ENCODE measurements at regions of chr19 and their contacts with region 1.

Region 1: DNA sequence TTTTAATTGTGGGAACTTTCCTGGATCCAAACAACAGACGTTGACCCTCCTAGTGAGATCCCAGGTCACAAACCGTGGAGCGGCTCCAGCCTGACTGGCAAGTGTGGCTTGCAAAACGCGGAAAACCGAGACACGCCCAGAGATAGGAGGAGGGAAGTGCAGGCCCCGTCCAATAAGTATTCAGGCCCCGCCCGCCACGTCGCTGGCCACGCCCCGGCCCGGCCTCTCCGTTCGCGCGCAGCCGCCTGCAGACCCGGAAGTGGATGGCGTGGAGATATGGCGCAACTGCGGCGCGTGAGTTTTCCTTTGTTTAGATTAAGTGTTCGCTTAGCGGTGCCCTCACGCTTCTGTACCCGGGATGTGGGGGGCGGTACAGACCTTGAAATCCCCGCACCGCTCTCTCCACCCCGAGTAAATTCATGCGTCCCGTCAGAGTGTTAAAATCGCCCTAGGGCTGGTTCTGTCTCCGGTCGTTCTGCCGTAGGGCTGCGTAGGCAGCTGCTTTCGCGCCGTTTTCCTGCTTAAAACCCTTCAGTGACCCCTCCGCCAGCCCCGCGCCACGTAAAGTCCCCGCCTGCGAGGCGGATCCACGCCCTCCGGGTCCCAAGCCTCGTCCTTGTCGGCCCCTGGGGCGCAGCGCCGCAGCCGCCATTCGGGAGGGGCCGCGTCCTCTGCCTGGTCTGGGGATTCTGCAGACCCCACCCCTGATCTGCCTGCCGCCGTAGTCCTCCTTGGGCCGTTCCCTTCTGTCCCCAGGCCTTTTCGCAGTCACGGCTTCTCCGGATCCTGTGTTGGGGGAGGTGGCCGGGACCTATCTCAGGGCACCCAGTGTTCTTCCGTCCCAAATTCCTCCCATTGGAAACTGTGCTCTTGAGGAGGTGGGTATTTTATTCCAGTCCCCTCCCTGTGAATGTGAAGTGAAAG is at the start of gene ZNF766:
- DNase-seq: peak; percentile 95 to 96 (median 96)
- H3K4me3 ChIP-seq: peak within 1 kb of the TSS; percentile 64 to 90
- H3K4me3 Mint-ChIP-seq: peak within 1 kb of the TSS; percentile 92 to 99 (median 98)
- H3K27ac ChIP-seq: peak within 1 kb of the TSS; percentile 90
- H3K27ac Mint-ChIP-seq: peak within 1 kb of the TSS; percentile 93 to 98 (median 96)
- H3K4me1 ChIP-seq: peaks cover 42% of the 10 kb centered on the region
- H3K4me1 Mint-ChIP-seq: peaks cover 32 to 56% (median 42%) of the 10 kb centered on the region in 4 donors
- H3K27me3 ChIP-seq: no peaks in the 10 kb centered on the region
- H3K27me3 Mint-ChIP-seq: no peaks in the 10 kb centered on the region
- total RNA-seq, gene ZNF766: 53.6 to 54.1 TPM

Region 2: DNA sequence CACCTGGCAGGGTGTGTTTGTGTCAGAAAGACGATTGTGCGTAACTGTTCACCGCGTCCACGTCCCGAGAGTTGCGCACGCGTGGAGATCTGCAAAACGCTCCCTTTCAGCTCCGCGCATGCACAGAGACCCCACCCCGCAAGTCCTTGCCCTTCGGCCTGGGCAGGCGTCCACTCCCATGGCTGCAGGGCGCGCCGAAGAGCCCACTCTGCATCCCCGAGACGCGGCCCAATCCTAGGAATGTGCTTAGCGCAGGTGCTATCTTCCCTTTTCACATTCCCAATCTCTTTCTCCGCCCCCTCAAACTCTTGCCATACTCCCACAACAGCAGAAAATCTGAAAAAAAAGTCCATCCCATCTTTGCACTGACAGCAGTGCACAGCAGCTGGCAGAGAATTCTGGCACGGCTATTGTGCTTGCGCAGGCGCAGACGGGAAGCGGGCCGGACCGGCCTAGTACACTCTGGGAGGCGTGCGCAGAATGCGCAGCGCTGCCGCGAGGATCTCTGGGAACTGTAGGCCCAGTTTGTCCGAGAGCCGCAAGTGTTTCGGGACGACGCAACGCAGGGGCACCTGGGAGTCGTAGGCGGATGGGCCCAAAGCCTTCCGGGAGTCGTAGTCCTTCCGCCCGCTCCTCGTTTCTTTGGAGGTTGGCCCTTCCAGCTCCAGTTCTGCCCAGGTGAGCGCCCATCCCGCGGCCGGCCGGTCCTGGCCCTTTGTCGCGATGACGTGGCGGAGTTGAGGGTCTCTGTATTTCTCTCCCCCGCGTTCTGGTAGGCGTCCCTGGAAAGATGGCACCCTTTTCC is 675.4 kb before region 1 on chr19:
- CTCF ChIA-PET with region 1: no interaction called
- POLR2A ChIA-PET with region 1: no interaction called
- intact Hi-C with region 1: no loop called
- DNase-seq: peak; percentile 92 to 94 (median 93)
- H3K4me3 ChIP-seq: peak overlapping the region; percentile 91 to 93
- H3K4me3 Mint-ChIP-seq: peak overlapping the region; percentile 85 to 100 (median 96)
- H3K27ac ChIP-seq: peak overlapping the region; percentile 58
- H3K27ac Mint-ChIP-seq: peak overlapping the region; percentile 33 to 97 (median 93)
- H3K4me1 ChIP-seq: peaks cover 16% of the 10 kb centered on the region
- H3K4me1 Mint-ChIP-seq: peaks cover 16 to 25% (median 22%) of the 10 kb centered on the region in 4 donors
- H3K27me3 ChIP-seq: no peaks in the 10 kb centered on the region
- H3K27me3 Mint-ChIP-seq: peaks cover 2 to 11% of the 10 kb centered on the region in 2 donors

Region 3: GRCh38 chr19:52095172-52096014 is 174.2 kb before region 1 on chr19 and contains the start of gene ZNF841:
- CTCF ChIA-PET with region 1: no interaction called
- POLR2A ChIA-PET with region 1: no interaction called
- intact Hi-C with region 1: loop called (anchors 1 kb)
- DNase-seq: peak; percentile 77 to 84 (median 80)
- H3K4me3 ChIP-seq: peak within 1 kb of the TSS; percentile 55 to 98
- H3K4me3 Mint-ChIP-seq: peak within 1 kb of the TSS; percentile 94 to 99 (median 99)
- H3K27ac ChIP-seq: peak within 1 kb of the TSS; percentile 81
- H3K27ac Mint-ChIP-seq: peak within 1 kb of the TSS; percentile 92 to 98 (median 98)
- H3K4me1 ChIP-seq: peaks cover 17% of the 10 kb centered on the region
- H3K4me1 Mint-ChIP-seq: peaks cover 20 to 41% (median 32%) of the 10 kb centered on the region in 4 donors
- H3K27me3 ChIP-seq: no peaks in the 10 kb centered on the region
- H3K27me3 Mint-ChIP-seq: peaks cover 0 to 1% of the 10 kb centered on the region in 2 donors
- total RNA-seq, gene ZNF841: 48.0 to 56.0 TPM

Region 4: GRCh38 chr19:52189735-52190486 is 79.7 kb before region 1 on chr19 and contains the start of gene PPP2R1A:
- CTCF ChIA-PET with region 1: no interaction called
- POLR2A ChIA-PET with region 1: interaction called, 3 read pairs
- intact Hi-C with region 1: loop called (anchors 1 kb)
- DNase-seq: peak; percentile 97 to 100 (median 99)
- H3K4me3 ChIP-seq: peak within 1 kb of the TSS; percentile 75 to 87
- H3K4me3 Mint-ChIP-seq: peak within 1 kb of the TSS; percentile 94 to 99 (median 98)
- H3K27ac ChIP-seq: peak within 1 kb of the TSS; percentile 93
- H3K27ac Mint-ChIP-seq: peak within 1 kb of the TSS; percentile 92 to 100 (median 99)
- H3K4me1 ChIP-seq: peaks cover 53% of the 10 kb centered on the region
- H3K4me1 Mint-ChIP-seq: peaks cover 34 to 58% (median 43%) of the 10 kb centered on the region in 4 donors
- H3K27me3 ChIP-seq: no peaks in the 10 kb centered on the region
- H3K27me3 Mint-ChIP-seq: no peaks in the 10 kb centered on the region
- total RNA-seq, gene PPP2R1A: 166 to 175 TPM

Region 5: DNA sequence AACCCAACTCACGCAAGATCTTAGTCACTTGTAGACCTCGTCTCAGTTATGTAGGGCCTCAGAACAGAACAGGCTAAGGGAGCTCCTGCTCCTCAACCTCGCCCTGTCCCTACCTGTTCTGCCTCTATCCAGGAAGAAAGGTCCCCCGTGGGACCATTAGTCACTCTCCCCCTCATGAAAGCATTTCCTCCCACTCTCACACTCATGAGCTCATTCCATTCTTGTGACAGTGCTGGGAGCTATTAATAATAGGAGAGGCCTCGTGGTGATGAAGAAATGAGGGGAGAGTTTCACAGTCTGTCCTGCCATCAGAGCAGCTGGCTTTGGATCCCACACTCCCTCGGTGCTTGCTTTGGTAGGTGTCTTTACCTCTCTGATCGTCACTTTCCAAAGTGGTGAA is 69.6 kb before region 1 on chr19:
- CTCF ChIA-PET with region 1: no interaction called
- POLR2A ChIA-PET with region 1: no interaction called
- intact Hi-C with region 1: no loop called
- DNase-seq: no peak
- H3K4me3 ChIP-seq: no peak overlapping the region
- H3K4me3 Mint-ChIP-seq: no peak overlapping the region
- H3K27ac ChIP-seq: no peak overlapping the region
- H3K27ac Mint-ChIP-seq: peak overlapping the region in 2 of 7 donors; percentile 13 to 15
- H3K4me1 ChIP-seq: peaks cover 7% of the 10 kb centered on the region
- H3K4me1 Mint-ChIP-seq: peaks cover 45 to 86% (median 67%) of the 10 kb centered on the region in 4 donors
- H3K27me3 ChIP-seq: no peaks in the 10 kb centered on the region
- H3K27me3 Mint-ChIP-seq: no peaks in the 10 kb centered on the region

Region 6: DNA sequence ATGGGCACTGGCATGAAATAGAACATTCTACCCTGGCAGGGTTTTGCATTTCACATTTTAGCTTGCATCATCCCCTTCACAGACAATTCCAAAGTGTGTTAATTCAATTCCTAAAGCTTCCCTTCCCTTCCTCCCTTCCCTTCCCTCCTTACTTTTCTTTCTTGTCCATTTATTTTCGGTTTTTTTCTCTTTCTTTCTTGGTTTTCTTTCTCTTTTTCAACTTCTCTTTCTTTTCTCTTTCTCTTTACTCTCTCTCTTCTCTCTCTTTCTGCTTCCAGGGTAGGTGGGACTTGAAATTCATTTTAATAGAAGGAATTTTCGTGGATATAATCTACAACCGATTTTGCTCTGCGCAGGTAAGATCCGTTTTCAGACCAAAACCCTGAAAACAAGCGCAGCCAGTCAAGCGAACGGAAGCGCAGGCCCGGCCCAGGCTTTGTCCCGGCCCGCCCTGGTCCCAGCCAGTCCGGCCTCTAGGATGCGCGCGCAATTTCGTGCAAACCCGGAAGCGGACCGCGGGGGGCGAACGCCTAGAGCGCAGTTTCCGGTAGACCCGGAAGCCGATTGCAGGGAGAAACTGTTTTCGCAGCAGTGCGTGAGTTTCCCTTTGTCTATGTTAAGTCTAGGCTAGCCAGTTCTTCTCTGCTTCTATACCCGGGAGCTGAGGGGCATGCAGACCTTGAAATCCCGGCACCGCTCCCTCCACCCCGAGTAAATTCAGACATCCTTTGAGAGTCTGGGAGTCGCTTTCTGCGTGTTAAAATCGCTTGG is 127.9 kb after region 1 on chr19 and contains the start of gene ZNF528:
- CTCF ChIA-PET with region 1: no interaction called
- POLR2A ChIA-PET with region 1: no interaction called
- intact Hi-C with region 1: loop called (anchors 1 kb)
- DNase-seq: peak; percentile 85 to 93 (median 88)
- H3K4me3 ChIP-seq: peak within 1 kb of the TSS; percentile 89 to 98
- H3K4me3 Mint-ChIP-seq: peak within 1 kb of the TSS; percentile 86 to 95 (median 90)
- H3K27ac ChIP-seq: peak within 1 kb of the TSS; percentile 56
- H3K27ac Mint-ChIP-seq: peak within 1 kb of the TSS; percentile 76 to 93 (median 92)
- H3K4me1 ChIP-seq: peaks cover 14% of the 10 kb centered on the region
- H3K4me1 Mint-ChIP-seq: peaks cover 13 to 29% (median 22%) of the 10 kb centered on the region in 4 donors
- H3K27me3 ChIP-seq: no peaks in the 10 kb centered on the region
- H3K27me3 Mint-ChIP-seq: no peaks in the 10 kb centered on the region
- total RNA-seq, gene ZNF528: 44.6 to 49.9 TPM

Region 7: DNA sequence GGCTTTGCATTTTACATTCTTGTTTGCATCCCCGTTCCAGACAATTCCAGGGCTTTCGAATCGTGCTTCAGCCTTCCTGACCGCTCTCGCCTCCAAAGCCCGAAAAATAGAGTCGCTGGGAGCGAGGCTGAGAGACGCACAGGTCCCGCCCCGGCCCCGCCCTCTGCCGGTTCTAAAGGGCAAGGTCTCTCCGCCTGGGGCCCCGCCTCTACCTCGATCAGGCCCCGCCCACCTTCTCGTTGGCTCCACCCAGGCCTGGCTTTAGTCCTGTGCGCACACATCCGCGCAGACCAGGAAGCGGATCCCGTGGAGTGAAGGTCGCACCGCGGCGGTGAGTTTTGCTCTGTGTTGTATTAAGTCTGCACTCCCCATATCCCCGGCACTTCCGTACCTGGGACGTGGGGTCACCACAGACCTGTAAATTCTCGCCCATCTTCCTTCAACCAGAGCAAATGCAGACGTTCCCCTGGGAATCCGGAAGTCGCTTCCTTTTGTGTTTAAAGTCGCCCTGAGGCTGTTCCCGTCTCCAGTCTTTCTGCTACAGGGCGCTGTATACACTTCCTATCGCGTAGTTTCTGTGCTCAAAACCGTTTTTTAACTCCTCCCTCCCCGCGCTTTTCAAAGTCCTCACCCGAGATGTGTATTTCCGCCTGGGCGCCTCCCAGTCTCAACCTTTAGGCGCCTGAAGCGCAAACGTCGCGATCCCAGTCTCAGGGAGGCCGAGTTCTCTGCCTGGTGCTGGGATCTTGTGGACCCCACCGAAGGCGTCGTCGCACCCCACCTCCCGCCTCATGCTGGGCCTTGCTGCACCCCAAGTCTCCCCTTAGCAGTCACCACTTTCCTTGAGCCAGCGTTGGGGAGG is 300.6 kb after region 1 on chr19 and contains the start of gene ZNF701:
- CTCF ChIA-PET with region 1: no interaction called
- POLR2A ChIA-PET with region 1: no interaction called
- intact Hi-C with region 1: loop called (anchors 1 kb)
- DNase-seq: peak; percentile 95 to 96 (median 95)
- H3K4me3 ChIP-seq: peak within 1 kb of the TSS; percentile 89 to 96
- H3K4me3 Mint-ChIP-seq: peak within 1 kb of the TSS; percentile 91 to 98 (median 96)
- H3K27ac ChIP-seq: peak within 1 kb of the TSS; percentile 67
- H3K27ac Mint-ChIP-seq: peak within 1 kb of the TSS; percentile 83 to 99 (median 97)
- H3K4me1 ChIP-seq: peaks cover 16% of the 10 kb centered on the region
- H3K4me1 Mint-ChIP-seq: peaks cover 16 to 41% (median 34%) of the 10 kb centered on the region in 4 donors
- H3K27me3 ChIP-seq: no peaks in the 10 kb centered on the region
- H3K27me3 Mint-ChIP-seq: no peaks in the 10 kb centered on the region
- total RNA-seq, gene ZNF701: 51.1 to 51.7 TPM

Measured in CD4-positive, alpha-beta memory T cell (primary cell).